PC-9 (cell line): ENCODE measurements at regions of chrX and their contacts with region 1.

Region 1: GRCh38 chrX:57156397-57157049 is 19.3 kb upstream of the SPIN2A start:
- DNase-seq: peak in 1 of 2 experiments; percentile 33
- H3K4me3 ChIP-seq: no peak overlapping the region
- H3K27ac ChIP-seq: no peak overlapping the region
- H3K4me1 ChIP-seq: no peaks in the 10 kb centered on the region
- H3K27me3 ChIP-seq: no peaks in the 10 kb centered on the region
- CTCF ChIP-seq: peak; percentile 67

Region 2: GRCh38 chrX:56995271-56995994 is 161.1 kb before region 1 on chrX and contains the start of gene SPIN3:
- CTCF ChIA-PET with region 1: no interaction called
- POLR2A ChIA-PET with region 1: no interaction called
- intact Hi-C with region 1: loop called (anchors 10 kb)
- DNase-seq: peak; percentile 74 to 97
- H3K4me3 ChIP-seq: peak within 1 kb of the TSS; percentile 82
- H3K27ac ChIP-seq: peak within 1 kb of the TSS; percentile 70
- H3K4me1 ChIP-seq: no peaks in the 10 kb centered on the region; the same call in 1 of the 2 replicates
- H3K27me3 ChIP-seq: no peaks in the 10 kb centered on the region
- CTCF ChIP-seq: no peak
- total RNA-seq, gene SPIN3: 29.8 and 39.6 TPM in 2 replicates

Region 3: GRCh38 chrX:57918750-57919436 is 762.4 kb after region 1 on chrX:
- CTCF ChIA-PET with region 1: no interaction called
- POLR2A ChIA-PET with region 1: no interaction called
- intact Hi-C with region 1: loop called (anchors 2 kb)
- DNase-seq: peak in 1 of 2 experiments; percentile 19
- H3K4me3 ChIP-seq: no peak overlapping the region
- H3K27ac ChIP-seq: no peak overlapping the region
- H3K4me1 ChIP-seq: no peaks in the 10 kb centered on the region
- H3K27me3 ChIP-seq: no peaks in the 10 kb centered on the region; the same call in 1 of the 2 replicates
- CTCF ChIP-seq: peak; percentile 67